CD8-positive, alpha-beta T cell (primary cell): ENCODE measurements at regions of chr17 and their contacts with region 1.

Region 1: DNA sequence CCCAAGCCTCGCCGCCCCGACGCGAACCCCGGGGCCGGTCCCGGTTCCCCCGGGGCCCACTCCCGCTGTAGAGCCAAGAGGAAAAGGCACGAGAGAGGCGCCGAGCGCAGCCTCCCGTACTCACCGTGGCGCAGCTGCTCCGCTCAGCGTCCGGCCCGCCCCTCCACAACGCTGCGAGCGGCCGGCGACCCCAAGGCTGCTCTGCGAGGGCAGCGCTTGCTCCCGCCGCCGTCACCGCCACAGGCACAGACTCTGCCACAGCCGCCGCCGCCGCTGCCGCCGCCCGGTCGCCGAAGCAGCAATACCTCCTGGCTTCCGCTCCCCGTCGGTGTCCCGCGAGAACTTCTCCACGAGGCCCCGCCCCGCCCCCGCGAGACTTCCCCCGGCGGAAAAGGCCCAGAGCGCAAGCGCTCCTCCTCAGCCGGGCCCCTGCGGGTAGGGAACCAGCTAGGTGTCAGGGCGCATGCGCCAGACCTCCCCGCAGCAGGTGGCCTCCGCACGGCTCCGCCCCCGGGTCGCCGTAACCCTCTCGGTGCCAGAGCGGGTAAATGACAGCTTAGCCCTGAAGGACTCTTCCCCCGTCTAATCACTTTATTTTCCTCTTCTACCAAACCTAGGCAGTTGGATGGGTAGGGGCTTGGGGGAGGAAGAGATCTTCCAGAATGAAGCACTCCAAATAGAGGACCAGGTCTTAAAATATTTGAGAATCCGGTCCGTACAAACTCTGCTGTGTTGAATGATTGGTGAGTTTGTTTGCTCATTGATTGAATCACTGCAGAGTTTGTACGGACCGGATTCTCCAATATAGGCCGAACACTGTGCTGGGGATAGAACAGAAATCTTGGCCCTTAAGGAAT is at the start of gene GRB2:
- DNase-seq: peak; percentile 99 to 100 (median 99)
- ATAC-seq: peak; percentile 83
- H3K4me3 ChIP-seq: peak within 1 kb of the TSS; percentile 58 to 100
- H3K4me3 Mint-ChIP-seq: peak within 1 kb of the TSS; percentile 98
- H3K27ac ChIP-seq: peak within 1 kb of the TSS; percentile 77 to 86
- H3K27ac Mint-ChIP-seq: peak within 1 kb of the TSS; percentile 95
- H3K4me1 ChIP-seq: peaks cover 37% of the 10 kb centered on the region
- H3K4me1 Mint-ChIP-seq: peaks cover 47% of the 10 kb centered on the region
- H3K27me3 ChIP-seq: no peaks in the 10 kb centered on the region
- H3K27me3 Mint-ChIP-seq: no peaks in the 10 kb centered on the region
- CTCF ChIP-seq: no peak
- total RNA-seq, gene GRB2: 96.2 to 99.4 TPM

Region 2: GRCh38 chr17:75154195-75155106 is 251.1 kb before region 1 on chr17 and contains the start of gene JPT1:
- CTCF ChIA-PET with region 1: no interaction called
- POLR2A ChIA-PET with region 1: no interaction called
- intact Hi-C with region 1: loop called in 1 of 2 experiments (anchors 1 kb)
- DNase-seq: peak; percentile 94 to 99 (median 97)
- ATAC-seq: peak; percentile 97
- H3K4me3 ChIP-seq: peak within 1 kb of the TSS; percentile 88 to 94
- H3K4me3 Mint-ChIP-seq: peak within 1 kb of the TSS; percentile 91
- H3K27ac ChIP-seq: peak within 1 kb of the TSS; percentile 78 to 81
- H3K27ac Mint-ChIP-seq: peak within 1 kb of the TSS; percentile 87
- H3K4me1 ChIP-seq: peaks cover 23% of the 10 kb centered on the region
- H3K4me1 Mint-ChIP-seq: peaks cover 31% of the 10 kb centered on the region
- H3K27me3 ChIP-seq: no peaks in the 10 kb centered on the region
- H3K27me3 Mint-ChIP-seq: no peaks in the 10 kb centered on the region
- CTCF ChIP-seq: no peak
- total RNA-seq, gene JPT1: 15.1 to 17.3 TPM

Region 3: GRCh38 chr17:75168998-75169397 is 236.6 kb before region 1 on chr17:
- CTCF ChIA-PET with region 1: no interaction called
- POLR2A ChIA-PET with region 1: no interaction called
- intact Hi-C with region 1: no loop called
- DNase-seq: no peak
- ATAC-seq: no peak
- H3K4me3 ChIP-seq: no peak overlapping the region
- H3K4me3 Mint-ChIP-seq: no peak overlapping the region
- H3K27ac ChIP-seq: no peak overlapping the region
- H3K27ac Mint-ChIP-seq: no peak overlapping the region
- H3K4me1 ChIP-seq: peaks cover 9% of the 10 kb centered on the region
- H3K4me1 Mint-ChIP-seq: peaks cover 12% of the 10 kb centered on the region
- H3K27me3 ChIP-seq: no peaks in the 10 kb centered on the region
- H3K27me3 Mint-ChIP-seq: no peaks in the 10 kb centered on the region
- CTCF ChIP-seq: no peak

Region 4: DNA sequence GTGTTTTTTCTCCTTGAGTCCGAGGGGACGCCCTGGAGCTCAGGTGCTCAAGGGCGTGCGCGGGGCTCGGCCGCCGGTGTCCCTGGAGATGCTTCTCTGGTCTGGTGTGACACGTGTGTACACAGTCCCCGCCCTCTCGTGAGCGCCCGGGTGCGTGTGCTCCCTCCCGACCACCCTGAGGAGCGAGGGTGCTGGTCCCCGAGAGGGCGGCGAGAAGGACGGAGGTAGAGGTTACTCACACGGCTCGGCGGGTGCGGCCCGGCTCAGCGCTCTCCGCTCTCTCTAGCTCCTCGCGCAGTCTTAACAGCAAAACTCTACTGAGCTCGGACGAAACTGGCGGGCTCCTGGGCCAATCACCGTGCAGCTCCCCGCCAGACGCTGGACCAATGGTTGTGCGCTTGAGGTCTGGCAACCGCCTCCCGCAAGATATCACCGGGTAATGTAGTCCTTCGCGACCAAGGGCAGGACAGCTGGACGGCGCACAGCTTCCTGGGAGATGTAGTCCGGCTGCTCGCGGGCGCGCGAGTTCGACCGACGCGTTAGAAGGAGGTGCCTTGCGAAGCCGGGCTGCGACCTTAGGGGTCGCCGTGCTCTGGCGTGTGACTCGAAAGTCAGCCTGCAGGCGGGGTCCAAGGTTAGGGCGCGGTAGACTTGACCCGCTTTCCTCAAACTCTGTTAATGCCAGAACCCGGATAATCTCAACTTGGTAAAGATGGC is 116.3 kb before region 1 on chr17 and contains the start of gene SLC25A19:
- CTCF ChIA-PET with region 1: interaction called, 7 read pairs
- POLR2A ChIA-PET with region 1: interaction called, 18 read pairs
- intact Hi-C with region 1: loop called (anchors 1 kb)
- DNase-seq: peak; percentile 90 to 99 (median 96)
- ATAC-seq: peak; percentile 88
- H3K4me3 ChIP-seq: peak within 1 kb of the TSS; percentile 70 to 77
- H3K4me3 Mint-ChIP-seq: peak within 1 kb of the TSS; percentile 97
- H3K27ac ChIP-seq: peak within 1 kb of the TSS; percentile 95 to 97
- H3K27ac Mint-ChIP-seq: peak within 1 kb of the TSS; percentile 100
- H3K4me1 ChIP-seq: peaks cover 16% of the 10 kb centered on the region
- H3K4me1 Mint-ChIP-seq: peaks cover 16% of the 10 kb centered on the region
- H3K27me3 ChIP-seq: no peaks in the 10 kb centered on the region
- H3K27me3 Mint-ChIP-seq: no peaks in the 10 kb centered on the region
- CTCF ChIP-seq: no peak
- total RNA-seq, gene SLC25A19: 14.4 to 14.8 TPM

Region 5: GRCh38 chr17:75456417-75457046 is 50.9 kb after region 1 on chr17 and contains the start of gene TMEM94:
- CTCF ChIA-PET with region 1: no interaction called
- POLR2A ChIA-PET with region 1: no interaction called
- intact Hi-C with region 1: loop called (anchors 1 kb)
- DNase-seq: peak; percentile 80 to 98 (median 91)
- ATAC-seq: peak; percentile 97
- H3K4me3 ChIP-seq: peak within 1 kb of the TSS; percentile 100
- H3K4me3 Mint-ChIP-seq: peak within 1 kb of the TSS; percentile 96
- H3K27ac ChIP-seq: peak within 1 kb of the TSS; percentile 75 to 82
- H3K27ac Mint-ChIP-seq: peak within 1 kb of the TSS; percentile 92
- H3K4me1 ChIP-seq: peaks cover 16% of the 10 kb centered on the region
- H3K4me1 Mint-ChIP-seq: peaks cover 36% of the 10 kb centered on the region
- H3K27me3 ChIP-seq: no peaks in the 10 kb centered on the region
- H3K27me3 Mint-ChIP-seq: peaks cover 3% of the 10 kb centered on the region
- CTCF ChIP-seq: no peak
- total RNA-seq, gene TMEM94: 44.8 to 46.5 TPM

Region 6: GRCh38 chr17:75571197-75571873 is 165.7 kb after region 1 on chr17:
- CTCF ChIA-PET with region 1: no interaction called
- POLR2A ChIA-PET with region 1: no interaction called
- intact Hi-C with region 1: no loop called
- DNase-seq: peak in 1 of 9 experiments; percentile 44
- ATAC-seq: peak; percentile 34
- H3K4me3 ChIP-seq: no peak overlapping the region
- H3K4me3 Mint-ChIP-seq: no peak overlapping the region
- H3K27ac ChIP-seq: no peak overlapping the region
- H3K27ac Mint-ChIP-seq: no peak overlapping the region
- H3K4me1 ChIP-seq: no peaks in the 10 kb centered on the region
- H3K4me1 Mint-ChIP-seq: no peaks in the 10 kb centered on the region
- H3K27me3 ChIP-seq: no peaks in the 10 kb centered on the region
- H3K27me3 Mint-ChIP-seq: no peaks in the 10 kb centered on the region
- CTCF ChIP-seq: no peak

Region 7: GRCh38 chr17:75589012-75589918 is 183.7 kb after region 1 on chr17:
- CTCF ChIA-PET with region 1: no interaction called
- POLR2A ChIA-PET with region 1: no interaction called
- intact Hi-C with region 1: loop called in 1 of 2 experiments (anchors 1 kb)
- DNase-seq: peak; percentile 90 to 99 (median 95)
- ATAC-seq: peak; percentile 85
- H3K4me3 ChIP-seq: peak overlapping the region; percentile 59 to 74
- H3K4me3 Mint-ChIP-seq: peak overlapping the region; percentile 77
- H3K27ac ChIP-seq: peak overlapping the region; percentile 48 to 52
- H3K27ac Mint-ChIP-seq: peak overlapping the region; percentile 70
- H3K4me1 ChIP-seq: peaks cover 15% of the 10 kb centered on the region
- H3K4me1 Mint-ChIP-seq: peaks cover 15% of the 10 kb centered on the region
- H3K27me3 ChIP-seq: no peaks in the 10 kb centered on the region
- H3K27me3 Mint-ChIP-seq: no peaks in the 10 kb centered on the region
- CTCF ChIP-seq: peak; percentile 61

Region 8: GRCh38 chr17:75661531-75661930 is 255.9 kb after region 1 on chr17:
- CTCF ChIA-PET with region 1: no interaction called
- POLR2A ChIA-PET with region 1: no interaction called
- intact Hi-C with region 1: no loop called
- DNase-seq: no peak
- ATAC-seq: no peak
- H3K4me3 ChIP-seq: no peak overlapping the region
- H3K4me3 Mint-ChIP-seq: no peak overlapping the region
- H3K27ac ChIP-seq: no peak overlapping the region
- H3K27ac Mint-ChIP-seq: no peak overlapping the region
- H3K4me1 ChIP-seq: peaks cover 8% of the 10 kb centered on the region
- H3K4me1 Mint-ChIP-seq: peaks cover 13% of the 10 kb centered on the region
- H3K27me3 ChIP-seq: no peaks in the 10 kb centered on the region
- H3K27me3 Mint-ChIP-seq: no peaks in the 10 kb centered on the region
- CTCF ChIP-seq: no peak